IMR-90 (cell line): ENCODE measurements at regions of chr17 and their contacts with region 1.

Region 1: GRCh38 chr17:27455914-27456680 is at the start of gene KSR1:
- DNase-seq: peak; percentile 72
- ATAC-seq: peak; percentile 88
- H3K4me3 ChIP-seq: peak within 1 kb of the TSS; percentile 100
- H3K27ac ChIP-seq: peak within 1 kb of the TSS; percentile 93
- H3K4me1 ChIP-seq: peaks cover 23% of the 10 kb centered on the region
- H3K27me3 ChIP-seq: no peaks in the 10 kb centered on the region
- CTCF ChIP-seq: peak; percentile 51
- POLR2A ChIP-seq: peak; percentile 94
- RAD21 ChIP-seq: peak; percentile 48
- total RNA-seq, gene KSR1: 8.9 and 12.5 TPM in 2 replicates

Region 2: DNA sequence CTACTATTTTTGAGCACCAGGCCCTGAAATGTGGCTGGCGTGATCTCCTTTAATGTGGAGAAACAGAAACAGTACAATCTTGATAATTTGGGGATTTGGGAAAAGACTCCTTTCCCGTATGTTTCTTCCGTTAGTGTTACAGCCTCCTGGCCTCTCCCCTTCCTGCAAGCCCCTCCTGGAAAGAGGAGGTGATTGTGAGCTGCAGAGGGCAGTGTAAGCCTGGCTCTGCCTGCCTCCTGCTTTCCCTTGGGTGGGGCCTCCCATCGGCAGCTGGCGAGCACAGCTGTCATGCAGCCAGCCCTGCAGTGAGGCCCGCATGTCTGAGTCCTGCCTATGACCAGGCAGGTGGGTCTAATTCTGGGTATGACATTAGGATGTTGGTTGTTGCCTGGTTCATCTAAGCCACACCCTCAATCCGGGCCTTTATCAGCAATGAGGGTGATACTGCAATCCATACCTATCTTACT is 210.8 kb before region 1 on chr17:
- CTCF ChIA-PET with region 1: no interaction called
- POLR2A ChIA-PET with region 1: no interaction called
- dilution Hi-C with region 1: no loop called
- in situ Hi-C with region 1: no loop called
- intact Hi-C with region 1: loop called (anchors 10 kb)
- DNase-seq: peak; percentile 89
- ATAC-seq: peak; percentile 88
- H3K4me3 ChIP-seq: peak overlapping the region; percentile 18; the same call in 1 of the 2 replicates
- H3K27ac ChIP-seq: peak overlapping the region; percentile 78
- H3K4me1 ChIP-seq: peaks cover 18% of the 10 kb centered on the region
- H3K27me3 ChIP-seq: no peaks in the 10 kb centered on the region
- CTCF ChIP-seq: peak; percentile 78
- POLR2A ChIP-seq: no peak
- RAD21 ChIP-seq: peak; percentile 86

Region 3: DNA sequence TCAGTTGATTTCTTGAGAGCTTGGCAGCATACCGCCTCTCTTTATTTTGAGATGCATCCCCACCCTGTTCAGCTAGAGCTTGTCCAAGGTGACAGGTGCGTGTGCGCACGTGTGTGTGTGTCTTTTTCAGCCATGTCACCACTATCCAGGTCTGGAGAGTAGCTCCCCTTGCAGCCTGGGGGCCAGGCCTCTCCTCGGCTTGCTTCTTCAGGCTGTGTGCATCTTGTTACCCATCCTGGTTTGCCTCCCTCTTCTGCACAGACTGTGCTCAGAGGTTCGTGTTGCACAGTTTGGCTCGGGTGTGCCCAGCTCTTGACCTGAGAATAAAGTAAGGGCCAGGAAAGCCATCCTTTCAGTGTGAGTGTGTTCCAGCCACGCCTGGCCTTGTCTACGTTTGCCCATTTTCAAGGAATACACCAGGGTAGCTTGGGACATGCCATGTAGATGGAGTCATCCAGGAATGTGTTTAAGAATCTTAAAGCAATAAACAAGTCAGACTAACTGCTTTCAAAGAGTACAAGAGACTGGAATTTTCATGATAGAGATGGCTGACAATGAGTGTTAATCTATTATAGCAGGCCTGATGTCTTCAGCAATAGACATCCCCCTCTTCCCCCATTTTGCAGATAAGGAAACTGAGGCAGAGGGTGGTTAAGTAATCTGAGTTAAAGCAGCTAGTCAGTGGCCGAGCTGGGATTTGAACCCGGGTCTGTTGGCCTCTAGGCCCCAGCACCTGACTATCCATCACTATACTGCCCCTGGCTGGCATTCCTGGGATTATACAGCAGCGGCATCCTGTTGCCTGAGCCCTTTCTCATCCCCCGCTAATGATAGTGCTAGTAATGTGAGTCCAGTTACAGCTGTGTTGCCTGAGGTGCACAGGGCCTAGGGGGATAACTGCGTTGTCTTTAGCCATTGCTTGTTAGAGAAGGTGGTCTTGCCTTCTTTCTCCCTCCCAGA is 78.0 kb after region 1 on chr17:
- CTCF ChIA-PET with region 1: interaction called, 3 read pairs
- POLR2A ChIA-PET with region 1: no interaction called
- dilution Hi-C with region 1: no loop called
- in situ Hi-C with region 1: no loop called
- intact Hi-C with region 1: loop called (anchors 2 kb)
- DNase-seq: peak; percentile 98
- ATAC-seq: peak; percentile 75
- H3K4me3 ChIP-seq: no peak overlapping the region
- H3K27ac ChIP-seq: peak overlapping the region; percentile 94
- H3K4me1 ChIP-seq: peaks cover 68% of the 10 kb centered on the region
- H3K27me3 ChIP-seq: no peaks in the 10 kb centered on the region
- CTCF ChIP-seq: no peak
- POLR2A ChIP-seq: 0 out of 2 replicates have a peak, but pooled peaks have one; percentile 18
- RAD21 ChIP-seq: 0 out of 2 replicates have a peak, but pooled peaks have one; percentile 20

Region 4: GRCh38 chr17:27586203-27586721 is 130.2 kb after region 1 on chr17:
- CTCF ChIA-PET with region 1: no interaction called
- POLR2A ChIA-PET with region 1: no interaction called
- dilution Hi-C with region 1: no loop called
- in situ Hi-C with region 1: loop called (anchors 5 kb)
- intact Hi-C with region 1: no loop called
- DNase-seq: peak; percentile 87
- ATAC-seq: peak; percentile 86
- H3K4me3 ChIP-seq: no peak overlapping the region
- H3K27ac ChIP-seq: peak overlapping the region; percentile 73
- H3K4me1 ChIP-seq: peaks cover 17% of the 10 kb centered on the region
- H3K27me3 ChIP-seq: no peaks in the 10 kb centered on the region
- CTCF ChIP-seq: peak; percentile 21; the same call in 1 of the 2 replicates
- POLR2A ChIP-seq: peak; percentile 45; the same call in 1 of the 2 replicates
- RAD21 ChIP-seq: peak; percentile 1; the same call in 1 of the 2 replicates

Region 5: DNA sequence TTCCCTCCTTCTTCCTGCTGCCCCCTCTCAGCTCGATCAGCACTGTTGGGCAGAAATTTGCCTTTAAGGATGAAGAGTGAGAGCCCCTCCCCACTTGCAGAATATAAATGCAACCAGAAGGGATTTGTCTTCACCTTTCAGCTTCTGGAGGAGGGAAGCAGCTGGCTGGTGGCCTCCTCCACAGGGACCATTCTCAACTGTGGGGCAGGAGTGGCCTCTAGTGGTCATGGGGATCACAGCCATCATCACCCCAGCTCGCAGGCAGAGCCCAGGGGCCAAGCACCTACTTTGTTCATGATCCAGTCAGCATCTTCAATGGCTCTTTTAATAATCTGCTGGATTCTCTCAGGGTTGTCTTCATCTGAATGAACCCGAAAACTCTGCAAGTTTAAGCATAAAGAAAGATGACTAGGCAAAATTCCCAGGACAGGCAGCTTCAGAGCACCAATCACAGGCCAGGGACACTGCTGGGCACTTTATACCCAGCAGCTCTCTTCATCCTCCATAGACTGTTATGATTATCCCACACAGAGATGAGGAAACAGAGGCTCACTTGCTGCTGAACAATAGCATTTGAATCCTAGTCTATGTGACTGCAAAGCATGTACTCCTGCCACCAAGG is 424.0 kb after region 1 on chr17:
- CTCF ChIA-PET with region 1: no interaction called
- POLR2A ChIA-PET with region 1: no interaction called
- dilution Hi-C with region 1: no loop called
- in situ Hi-C with region 1: no loop called
- intact Hi-C with region 1: loop called (anchors 10 kb)
- DNase-seq: peak; percentile 54
- ATAC-seq: peak; percentile 98
- H3K4me3 ChIP-seq: no peak overlapping the region
- H3K27ac ChIP-seq: no peak overlapping the region
- H3K4me1 ChIP-seq: no peaks in the 10 kb centered on the region
- H3K27me3 ChIP-seq: no peaks in the 10 kb centered on the region; the same call in 1 of the 2 replicates
- CTCF ChIP-seq: peak; percentile 88
- POLR2A ChIP-seq: no peak
- RAD21 ChIP-seq: peak; percentile 93